GM18951 (cell line): ENCODE measurements at regions of chr10 and their contacts with region 1.

Region 1: GRCh38 chr10:47384148-47384921 is at the start of gene ZNF488:
- POLR2A ChIP-seq: no peak

Region 2: DNA sequence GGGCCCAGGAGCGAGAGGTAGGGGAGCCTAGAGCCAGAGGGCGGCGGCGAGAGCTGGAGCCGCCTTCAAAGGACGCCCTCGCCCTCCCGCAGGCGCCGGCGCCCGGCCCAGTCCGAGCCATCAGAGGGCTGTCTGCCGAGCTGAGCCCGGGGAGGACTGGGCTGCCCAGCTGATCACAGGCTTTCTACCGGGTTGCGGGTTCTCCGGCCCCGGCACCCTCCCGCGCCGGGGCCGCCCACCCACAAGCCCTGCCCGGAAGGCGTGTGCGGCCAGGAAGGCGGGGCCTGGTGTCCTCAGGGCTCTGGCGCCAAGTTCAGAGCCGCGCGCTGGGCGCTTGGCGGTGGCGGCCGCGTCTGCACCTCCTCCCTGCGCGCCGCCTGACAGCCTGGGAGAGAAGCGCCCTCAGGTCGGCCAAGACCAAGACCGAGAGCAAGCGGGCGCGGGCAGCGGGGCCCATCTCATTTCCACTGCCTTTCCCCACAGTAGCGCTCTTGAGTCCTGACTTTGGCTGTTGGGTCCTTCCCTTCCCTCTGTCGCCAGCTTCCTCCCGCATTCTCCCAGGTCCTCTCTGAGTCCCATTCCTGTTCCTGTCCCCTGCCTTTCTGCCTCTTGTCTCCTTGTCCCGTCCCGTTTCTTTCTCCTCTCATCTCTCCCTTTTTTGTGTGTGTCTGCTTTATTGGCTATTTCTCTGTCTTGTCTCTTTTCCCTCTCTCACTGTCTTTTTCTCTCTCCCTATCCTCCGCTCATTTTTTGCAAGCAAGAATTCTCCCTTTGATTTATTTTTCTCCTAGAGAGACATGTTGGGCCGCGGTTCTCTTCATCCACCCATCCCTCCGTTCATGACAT is 1277.7 kb before region 1 on chr10:
- in situ Hi-C with region 1: loop called (anchors 5 kb)
- POLR2A ChIP-seq: no peak